Activated CD8-positive, alpha-beta memory T cell treated with anti-CD3 and anti-CD28 coated beads, Interleukin-2, amount 10 ng/mL, durations not matched to agents 7 days and 5 days (primary cell): ENCODE measurements at regions of chr1 and their contacts with region 1.

Region 1: GRCh38 chr1:206734499-206735142 is 36.0 kb upstream of the IL19 start:
- DNase-seq: peak; percentile 83
- ATAC-seq: peak; percentile 31
- H3K4me3 Mint-ChIP-seq: no peak overlapping the region
- H3K27ac Mint-ChIP-seq: peak overlapping the region; percentile 21
- H3K4me1 Mint-ChIP-seq: peaks cover 70% of the 10 kb centered on the region
- H3K27me3 Mint-ChIP-seq: no peaks in the 10 kb centered on the region

Region 2: GRCh38 chr1:206744683-206745082 is 10.1 kb after region 1 on chr1:
- CTCF ChIA-PET with region 1: interaction called, 11 read pairs
- DNase-seq: peak; percentile 72
- ATAC-seq: peak; percentile 65
- H3K4me3 Mint-ChIP-seq: no peak overlapping the region
- H3K27ac Mint-ChIP-seq: no peak overlapping the region
- H3K4me1 Mint-ChIP-seq: peaks cover 65% of the 10 kb centered on the region
- H3K27me3 Mint-ChIP-seq: peaks cover 32% of the 10 kb centered on the region

Region 3: DNA sequence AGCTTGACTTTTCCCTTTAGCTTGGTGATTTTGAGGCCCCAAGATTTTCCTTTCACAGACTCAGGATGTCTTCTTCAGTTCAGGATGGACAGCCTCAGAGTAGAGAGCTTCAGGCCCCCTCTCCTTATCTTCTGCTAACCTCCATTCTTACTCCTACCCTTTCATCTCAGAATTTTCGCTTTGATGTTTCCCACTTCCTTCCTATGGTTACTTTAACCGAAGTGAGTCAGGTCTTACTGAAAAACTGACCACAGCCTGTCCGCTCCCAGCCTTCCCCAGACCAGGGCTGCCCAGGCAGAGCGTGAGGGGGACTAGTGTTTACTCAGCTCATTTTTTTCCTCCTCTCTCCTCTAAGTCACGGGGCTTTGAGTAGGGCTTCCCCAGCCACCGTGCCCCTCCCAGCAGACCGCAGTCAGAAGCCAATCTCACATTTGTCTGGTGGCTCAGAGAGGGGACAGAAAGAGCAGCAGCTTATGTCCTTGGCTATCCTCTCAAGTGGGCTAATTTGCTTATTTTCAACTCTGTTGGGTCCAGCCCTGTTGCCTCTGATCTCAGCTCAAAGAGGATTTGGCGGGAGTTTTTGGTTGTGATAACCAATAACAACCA is 31.7 kb after region 1 on chr1:
- CTCF ChIA-PET with region 1: interaction called, 27 read pairs
- DNase-seq: peak; percentile 91
- ATAC-seq: peak; percentile 68
- H3K4me3 Mint-ChIP-seq: peak overlapping the region; percentile 13
- H3K27ac Mint-ChIP-seq: peak overlapping the region; percentile 80
- H3K4me1 Mint-ChIP-seq: peaks cover 64% of the 10 kb centered on the region
- H3K27me3 Mint-ChIP-seq: peaks cover 34% of the 10 kb centered on the region

Region 4: GRCh38 chr1:206784471-206784903 is 49.9 kb after region 1 on chr1:
- CTCF ChIA-PET with region 1: interaction called, 19 read pairs
- DNase-seq: peak; percentile 96
- ATAC-seq: peak; percentile 83
- H3K4me3 Mint-ChIP-seq: peak overlapping the region; percentile 32
- H3K27ac Mint-ChIP-seq: peak overlapping the region; percentile 79
- H3K4me1 Mint-ChIP-seq: peaks cover 65% of the 10 kb centered on the region
- H3K27me3 Mint-ChIP-seq: peaks cover 11% of the 10 kb centered on the region

Region 5: GRCh38 chr1:206918076-206918475 is 183.5 kb after region 1 on chr1:
- CTCF ChIA-PET with region 1: interaction called, 101 read pairs
- DNase-seq: no peak
- ATAC-seq: no peak
- H3K4me3 Mint-ChIP-seq: peak overlapping the region; percentile 2
- H3K27ac Mint-ChIP-seq: peak overlapping the region; percentile 10
- H3K4me1 Mint-ChIP-seq: peaks cover 41% of the 10 kb centered on the region
- H3K27me3 Mint-ChIP-seq: no peaks in the 10 kb centered on the region